ENCODE measurements at regions of chr11 and their contacts with region 1.

Region 1: GRCh38 chr11:99670067-99670676 is 649.4 kb downstream of the CNTN5 start:
- DNase-seq: no peak
- ATAC-seq: no peak
- H3K4me3 ChIP-seq: no peak overlapping the region
- H3K27ac ChIP-seq: no peak overlapping the region
- H3K4me1 ChIP-seq: no peaks in the 10 kb centered on the region
- H3K27me3 ChIP-seq: no peaks in the 10 kb centered on the region
- CTCF ChIP-seq: no peak
- EP300 ChIP-seq: no peak
- POLR2A ChIP-seq: no peak
- RAD21 ChIP-seq: no peak

Region 2: DNA sequence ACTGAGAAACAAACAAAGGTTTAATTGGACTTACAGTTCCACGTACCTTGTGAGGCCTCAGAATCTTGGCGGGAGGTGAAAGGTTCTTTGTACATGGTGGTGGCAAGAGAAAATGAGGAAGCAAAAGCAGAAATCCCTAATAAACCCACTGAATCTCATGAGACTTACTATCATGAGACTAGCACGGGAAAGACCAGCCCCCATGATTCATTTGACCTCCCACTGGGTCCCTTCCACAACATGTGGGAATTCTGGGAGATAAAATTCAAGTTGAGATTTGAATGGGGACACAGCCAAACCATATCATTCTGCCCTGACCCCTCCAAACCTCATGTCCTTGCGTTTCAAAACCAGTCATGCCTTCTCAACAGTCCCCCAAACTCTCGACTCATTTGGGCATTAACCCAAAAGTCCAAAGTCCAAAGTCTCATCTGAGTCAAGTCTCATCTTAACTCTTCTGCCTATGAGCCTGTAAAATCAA is 32.1 kb before region 1 on chr11:
- CTCF ChIA-PET with region 1: no interaction called
- POLR2A ChIA-PET with region 1: no interaction called
- in situ Hi-C with region 1: no loop called
- intact Hi-C with region 1: loop called (anchors 1 kb)
- DNase-seq: no peak
- ATAC-seq: no peak
- H3K4me3 ChIP-seq: no peak overlapping the region
- H3K27ac ChIP-seq: no peak overlapping the region
- H3K4me1 ChIP-seq: no peaks in the 10 kb centered on the region
- H3K27me3 ChIP-seq: no peaks in the 10 kb centered on the region
- CTCF ChIP-seq: no peak
- EP300 ChIP-seq: no peak
- POLR2A ChIP-seq: no peak
- RAD21 ChIP-seq: no peak

Region 3: DNA sequence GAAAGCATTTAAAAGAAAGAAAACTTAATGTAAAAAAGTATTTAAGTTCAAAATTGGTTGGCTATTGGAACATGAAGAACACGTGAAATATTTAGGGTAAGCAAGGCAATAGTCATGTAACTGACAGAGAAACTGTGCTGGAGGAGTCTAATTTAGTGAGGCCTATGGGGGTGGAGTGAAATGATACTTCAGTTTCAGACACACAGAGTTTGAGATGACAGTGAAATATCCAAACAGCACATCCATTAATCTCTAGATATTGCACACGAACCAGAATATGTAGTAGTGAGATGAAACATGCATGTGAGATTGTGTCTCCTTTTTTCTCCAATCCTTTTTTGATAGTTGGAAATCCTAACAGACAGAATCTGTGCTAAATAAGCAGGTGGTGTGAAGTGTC is 89.6 kb after region 1 on chr11:
- CTCF ChIA-PET with region 1: no interaction called
- POLR2A ChIA-PET with region 1: no interaction called
- in situ Hi-C with region 1: no loop called
- intact Hi-C with region 1: no loop called
- DNase-seq: no peak
- ATAC-seq: no peak
- H3K4me3 ChIP-seq: no peak overlapping the region
- H3K27ac ChIP-seq: no peak overlapping the region
- H3K4me1 ChIP-seq: no peaks in the 10 kb centered on the region
- H3K27me3 ChIP-seq: no peaks in the 10 kb centered on the region
- CTCF ChIP-seq: no peak
- EP300 ChIP-seq: no peak
- POLR2A ChIP-seq: no peak
- RAD21 ChIP-seq: no peak

Region 4: DNA sequence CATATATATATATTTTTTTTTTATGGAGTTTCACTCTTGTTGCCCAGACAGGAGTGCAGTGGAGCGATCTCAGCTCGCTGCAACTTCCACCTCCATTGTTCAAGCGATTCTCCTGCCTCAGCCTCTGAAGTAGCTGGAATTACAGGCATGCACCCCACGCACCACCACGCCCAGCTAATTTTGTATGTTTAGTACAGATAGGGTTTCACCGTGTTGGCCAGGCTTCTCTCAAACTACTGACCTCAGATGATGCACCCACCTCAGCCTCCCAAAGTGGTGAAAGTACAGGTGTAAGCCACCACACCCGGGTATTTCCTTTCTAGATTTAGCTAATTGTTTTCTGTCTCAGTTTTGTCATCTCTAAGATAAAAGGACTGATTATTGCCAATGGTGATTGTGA is 171.7 kb after region 1 on chr11:
- CTCF ChIA-PET with region 1: no interaction called
- POLR2A ChIA-PET with region 1: no interaction called
- in situ Hi-C with region 1: no loop called
- intact Hi-C with region 1: no loop called
- DNase-seq: no peak
- ATAC-seq: no peak
- H3K4me3 ChIP-seq: no peak overlapping the region
- H3K27ac ChIP-seq: no peak overlapping the region
- H3K4me1 ChIP-seq: no peaks in the 10 kb centered on the region
- H3K27me3 ChIP-seq: no peaks in the 10 kb centered on the region
- CTCF ChIP-seq: no peak
- EP300 ChIP-seq: no peak
- POLR2A ChIP-seq: no peak
- RAD21 ChIP-seq: no peak